Naive thymus-derived CD4-positive, alpha-beta T cell (primary cell): ENCODE measurements at regions of chr21 and their contacts with region 1.

Region 1: DNA sequence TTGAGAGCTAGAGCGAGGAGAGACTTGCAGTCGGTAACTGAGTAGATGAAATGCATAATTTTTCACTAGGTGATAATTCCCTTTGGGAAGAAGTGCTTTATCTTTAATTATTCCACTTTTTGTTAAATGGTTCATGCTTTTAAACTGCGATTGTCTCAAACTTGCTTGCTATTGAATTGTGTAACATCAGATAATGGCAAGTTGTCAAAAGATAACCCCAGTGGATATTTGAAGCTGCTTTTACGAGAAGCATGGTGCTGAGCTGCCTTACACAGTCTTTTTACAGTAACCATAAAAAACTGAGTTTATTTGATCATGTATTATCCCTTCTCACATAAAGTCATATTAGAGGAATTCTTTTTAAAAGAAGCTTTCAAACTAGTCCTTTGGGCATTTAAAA is 30.2 kb downstream of the TMEM50B start:
- DNase-seq: no peak
- ATAC-seq: no peak
- H3K4me3 ChIP-seq: no peak overlapping the region
- H3K4me3 Mint-ChIP-seq: no peak overlapping the region
- H3K27ac ChIP-seq: no peak overlapping the region
- H3K27ac Mint-ChIP-seq: peak overlapping the region in 4 of 9 donors; percentile 51 to 81 (median 60)
- H3K4me1 ChIP-seq: no peaks in the 10 kb centered on the region
- H3K4me1 Mint-ChIP-seq: peaks cover 0 to 5% (median 4%) of the 10 kb centered on the region in 7 donors
- H3K27me3 ChIP-seq: no peaks in the 10 kb centered on the region
- H3K27me3 Mint-ChIP-seq: no peaks in the 10 kb centered on the region

Region 2: GRCh38 chr21:32994305-32994704 is 455.3 kb before region 1 on chr21:
- CTCF ChIA-PET with region 1: no interaction called
- POLR2A ChIA-PET with region 1: interaction called, 3 read pairs
- intact Hi-C with region 1: loop called in 1 of 2 experiments (anchors 5 kb)
- DNase-seq: peak in 1 of 9 donors; percentile 10
- ATAC-seq: no peak
- H3K4me3 ChIP-seq: no peak overlapping the region
- H3K4me3 Mint-ChIP-seq: no peak overlapping the region
- H3K27ac ChIP-seq: no peak overlapping the region
- H3K27ac Mint-ChIP-seq: no peak overlapping the region
- H3K4me1 ChIP-seq: no peaks in the 10 kb centered on the region
- H3K4me1 Mint-ChIP-seq: peaks cover 0 to 2% (median 0%) of the 10 kb centered on the region in 7 donors
- H3K27me3 ChIP-seq: no peaks in the 10 kb centered on the region
- H3K27me3 Mint-ChIP-seq: peaks cover 5 to 57% (median 20%) of the 10 kb centered on the region in 5 donors

Region 3: GRCh38 chr21:33121715-33122475 is 327.7 kb before region 1 on chr21:
- CTCF ChIA-PET with region 1: no interaction called
- POLR2A ChIA-PET with region 1: no interaction called
- intact Hi-C with region 1: loop called (anchors 5 kb)
- DNase-seq: no peak
- ATAC-seq: no peak
- H3K4me3 ChIP-seq: no peak overlapping the region
- H3K4me3 Mint-ChIP-seq: no peak overlapping the region
- H3K27ac ChIP-seq: no peak overlapping the region
- H3K27ac Mint-ChIP-seq: peak overlapping the region in 2 of 9 donors; percentile 3 to 72
- H3K4me1 ChIP-seq: peaks cover 0 to 8% of the 10 kb centered on the region in 2 donors
- H3K4me1 Mint-ChIP-seq: peaks cover under 1 to 17% (median 11%) of the 10 kb centered on the region in 7 donors
- H3K27me3 ChIP-seq: no peaks in the 10 kb centered on the region
- H3K27me3 Mint-ChIP-seq: peaks cover 0 to 25% (median 0%) of the 10 kb centered on the region in 5 donors